CD14-positive monocyte (primary cell): ENCODE measurements at regions of chr13 and their contacts with region 1.

Region 1: DNA sequence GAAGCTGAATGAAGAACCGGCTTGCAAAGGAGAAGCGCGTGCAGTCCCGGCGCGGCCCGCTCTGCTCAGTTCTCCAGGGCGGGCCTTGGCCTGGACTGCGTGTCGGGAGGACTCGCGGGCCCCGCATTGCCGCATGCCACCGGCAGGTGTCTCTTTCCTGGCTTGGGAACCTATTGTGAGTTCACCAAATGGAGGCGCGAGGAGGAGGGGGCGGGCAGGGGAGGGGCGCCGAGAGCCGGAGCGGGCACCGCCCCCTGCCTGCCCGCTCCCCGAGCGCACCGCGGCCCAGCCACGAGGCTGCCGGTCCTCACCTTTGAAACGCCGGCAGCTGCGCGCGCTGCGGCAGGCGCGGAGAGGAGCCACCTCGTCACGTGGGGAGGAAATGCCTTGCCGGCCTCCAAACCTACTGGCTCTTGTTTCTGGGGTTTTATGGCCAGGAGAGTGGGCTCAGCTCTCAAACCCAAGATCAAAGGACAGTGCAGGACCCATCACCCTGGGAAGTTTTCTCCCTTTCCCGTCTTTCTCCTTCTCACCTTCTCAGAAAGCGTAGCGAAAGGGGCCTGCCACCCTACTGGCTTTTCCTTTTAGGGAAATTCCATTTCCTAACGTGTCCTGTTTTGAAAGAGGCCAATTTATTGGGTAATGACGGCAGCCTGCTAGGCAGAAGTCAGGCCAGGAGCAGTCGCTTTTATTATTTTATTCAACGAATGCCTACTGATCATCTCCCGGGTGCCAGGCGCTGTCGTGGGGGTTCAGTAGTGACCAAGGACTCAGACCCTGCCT is 13.8 kb upstream of the UBE2L5 start:
- DNase-seq: peak; percentile 91 to 94 (median 93)
- H3K4me3 ChIP-seq: peak overlapping the region; percentile 41 to 75 (median 53)
- H3K4me3 Mint-ChIP-seq: peak overlapping the region; percentile 81 to 92
- H3K27ac ChIP-seq: peak overlapping the region; percentile 95 to 99
- H3K27ac Mint-ChIP-seq: peak overlapping the region; percentile 97 to 100 (median 98)
- H3K4me1 ChIP-seq: peaks cover 27 to 34% of the 10 kb centered on the region in 2 donors
- H3K4me1 Mint-ChIP-seq: peaks cover 36% of the 10 kb centered on the region
- H3K27me3 ChIP-seq: no peaks in the 10 kb centered on the region
- H3K27me3 Mint-ChIP-seq: peaks cover 0 to 1% (median 0%) of the 10 kb centered on the region in 3 donors
- CTCF ChIP-seq: peak; percentile 82

Region 2: GRCh38 chr13:30306762-30307193 is 101.7 kb before region 1 on chr13:
- intact Hi-C with region 1: loop called in 1 of 2 experiments (anchors 10 kb)
- DNase-seq: peak; percentile 84 to 90 (median 86)
- H3K4me3 ChIP-seq: peak overlapping the region; percentile 73 to 97 (median 84)
- H3K4me3 Mint-ChIP-seq: peak overlapping the region; percentile 83 to 90
- H3K27ac ChIP-seq: peak overlapping the region in 1 of 2 donors; percentile 79
- H3K27ac Mint-ChIP-seq: peak overlapping the region in 6 of 7 donors; percentile 33 to 81 (median 68)
- H3K4me1 ChIP-seq: peaks cover 18 to 24% of the 10 kb centered on the region in 2 donors
- H3K4me1 Mint-ChIP-seq: peaks cover 36% of the 10 kb centered on the region
- H3K27me3 ChIP-seq: no peaks in the 10 kb centered on the region
- H3K27me3 Mint-ChIP-seq: peaks cover 0 to 2% (median 0%) of the 10 kb centered on the region in 3 donors
- CTCF ChIP-seq: no peak

Region 3: DNA sequence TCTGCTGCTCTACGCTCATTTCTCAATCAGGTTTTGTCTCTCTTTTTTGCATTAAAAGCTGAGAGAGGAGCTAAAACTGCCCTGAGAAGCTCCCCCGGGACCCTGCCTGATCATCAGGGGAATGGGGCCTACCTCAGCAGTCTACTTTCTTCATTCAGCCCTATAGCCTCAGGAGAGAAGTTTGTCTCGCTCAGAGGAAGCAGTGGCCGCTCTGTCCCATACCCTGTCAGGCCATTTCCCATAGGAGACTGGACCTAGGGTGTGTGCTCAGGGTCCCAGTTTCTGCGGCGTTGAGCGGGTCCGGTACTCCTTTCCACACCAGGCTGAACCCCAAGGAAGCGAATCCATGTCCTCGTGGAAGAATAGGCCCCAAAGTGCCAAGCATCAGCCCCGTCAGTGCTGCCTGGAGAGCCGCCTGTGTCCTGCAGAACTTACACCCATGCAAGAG is 35.5 kb after region 1 on chr13:
- intact Hi-C with region 1: loop called in 1 of 2 experiments (anchors 5 kb)
- DNase-seq: no peak
- H3K4me3 ChIP-seq: no peak overlapping the region
- H3K4me3 Mint-ChIP-seq: no peak overlapping the region
- H3K27ac ChIP-seq: no peak overlapping the region
- H3K27ac Mint-ChIP-seq: peak overlapping the region in 1 of 7 donors; percentile 18
- H3K4me1 ChIP-seq: peaks cover 12 to 13% of the 10 kb centered on the region in 2 donors
- H3K4me1 Mint-ChIP-seq: peaks cover 12% of the 10 kb centered on the region
- H3K27me3 ChIP-seq: no peaks in the 10 kb centered on the region
- H3K27me3 Mint-ChIP-seq: peaks cover 2 to 11% (median 8%) of the 10 kb centered on the region in 3 donors
- CTCF ChIP-seq: no peak